SK-N-SH (cell line): ENCODE measurements at regions of chr5 and their contacts with region 1.

Region 1: GRCh38 chr5:157471709-157472108 is 11.7 kb downstream of the NIPAL4 start:
- DNase-seq: peak; percentile 51
- H3K4me3 ChIP-seq: no peak overlapping the region
- H3K27ac ChIP-seq: 0 out of 4 replicates have a peak overlapping the region, but pooled peaks of 1 of the 2 experiments have one; percentile 40
- H3K4me1 ChIP-seq: peaks cover 1 to 15% of the 10 kb centered on the region in 2 experiments; a peak in 3 of 4 replicates
- H3K27me3 ChIP-seq: no peaks in the 10 kb centered on the region
- CTCF ChIP-seq: peak; percentile 70
- EP300 ChIP-seq: no peak
- RAD21 ChIP-seq: peak; percentile 59

Region 2: GRCh38 chr5:157342822-157343402 is 128.8 kb before region 1 on chr5:
- CTCF ChIA-PET with region 1: interaction called, 21 read pairs
- POLR2A ChIA-PET with region 1: no interaction called
- DNase-seq: peak; percentile 62
- H3K4me3 ChIP-seq: no peak overlapping the region
- H3K27ac ChIP-seq: no peak overlapping the region
- H3K4me1 ChIP-seq: no peaks in the 10 kb centered on the region
- H3K27me3 ChIP-seq: no peaks in the 10 kb centered on the region
- CTCF ChIP-seq: peak; percentile 57
- EP300 ChIP-seq: no peak
- RAD21 ChIP-seq: peak; percentile 50

Region 3: GRCh38 chr5:157431544-157432200 is 40.0 kb before region 1 on chr5:
- CTCF ChIA-PET with region 1: interaction called, 54 read pairs
- POLR2A ChIA-PET with region 1: no interaction called
- DNase-seq: no peak
- H3K4me3 ChIP-seq: no peak overlapping the region; a peak in 1 of 4 replicates
- H3K27ac ChIP-seq: no peak overlapping the region
- H3K4me1 ChIP-seq: no peaks in the 10 kb centered on the region
- H3K27me3 ChIP-seq: no peaks in the 10 kb centered on the region
- CTCF ChIP-seq: peak; percentile 62
- EP300 ChIP-seq: no peak
- RAD21 ChIP-seq: peak; percentile 78

Region 4: DNA sequence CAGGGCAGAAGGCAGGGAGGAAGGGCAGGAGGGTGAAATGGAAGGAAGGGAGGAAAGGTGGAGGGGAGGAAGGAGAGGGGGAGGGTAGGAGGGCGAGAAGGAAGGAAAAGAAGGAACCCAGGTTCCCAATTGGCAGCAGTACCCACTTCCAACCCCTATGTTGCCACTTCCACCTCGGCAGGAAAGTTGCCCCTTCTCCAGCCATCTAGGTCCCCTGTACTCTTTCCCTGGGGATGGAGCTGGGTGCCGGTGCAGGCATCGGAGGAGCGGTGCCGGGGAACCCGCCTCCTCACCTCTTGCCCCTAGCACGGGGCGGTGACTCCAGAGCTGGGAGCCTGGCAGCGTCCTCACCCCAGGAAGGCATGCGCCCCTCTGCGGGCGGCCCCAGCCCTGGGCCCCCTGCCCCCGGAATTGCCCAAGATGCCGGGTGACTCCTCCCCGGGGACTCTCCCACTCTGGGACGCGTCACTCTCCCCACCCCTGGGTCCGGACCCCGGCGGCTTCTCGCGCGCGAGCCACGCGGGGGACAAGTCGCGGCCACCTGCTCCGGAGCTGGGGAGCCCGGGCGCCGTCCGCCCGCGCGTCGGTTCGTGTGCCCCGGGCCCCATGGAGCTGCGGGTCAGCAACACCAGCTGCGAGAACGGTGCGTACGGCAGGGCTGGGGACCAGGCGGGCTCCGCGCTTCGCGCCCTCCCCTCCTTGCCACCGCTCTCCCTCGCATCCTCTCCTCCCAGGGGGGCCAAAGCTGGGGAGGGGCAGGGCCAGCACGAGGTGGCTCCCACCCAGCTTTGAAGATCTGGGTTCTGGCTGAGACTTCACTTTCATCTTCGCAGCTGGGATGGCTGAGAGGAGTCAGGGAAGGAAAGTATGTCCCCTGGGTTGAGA is 11.8 kb before region 1 on chr5 and contains the start of gene NIPAL4:
- CTCF ChIA-PET with region 1: interaction called, 32 read pairs
- POLR2A ChIA-PET with region 1: no interaction called
- DNase-seq: peak; percentile 77
- H3K4me3 ChIP-seq: peak within 1 kb of the TSS; percentile 62 to 65
- H3K27ac ChIP-seq: no peak within 1 kb of the TSS
- H3K4me1 ChIP-seq: peaks cover 11 to 13% of the 10 kb centered on the region in 2 experiments; a peak in 3 of 4 replicates
- H3K27me3 ChIP-seq: no peaks in the 10 kb centered on the region
- CTCF ChIP-seq: no peak
- EP300 ChIP-seq: no peak
- RAD21 ChIP-seq: no peak
- polyA plus RNA-seq, gene NIPAL4: 2.3 and 2.6 TPM in 2 replicates

Region 5: DNA sequence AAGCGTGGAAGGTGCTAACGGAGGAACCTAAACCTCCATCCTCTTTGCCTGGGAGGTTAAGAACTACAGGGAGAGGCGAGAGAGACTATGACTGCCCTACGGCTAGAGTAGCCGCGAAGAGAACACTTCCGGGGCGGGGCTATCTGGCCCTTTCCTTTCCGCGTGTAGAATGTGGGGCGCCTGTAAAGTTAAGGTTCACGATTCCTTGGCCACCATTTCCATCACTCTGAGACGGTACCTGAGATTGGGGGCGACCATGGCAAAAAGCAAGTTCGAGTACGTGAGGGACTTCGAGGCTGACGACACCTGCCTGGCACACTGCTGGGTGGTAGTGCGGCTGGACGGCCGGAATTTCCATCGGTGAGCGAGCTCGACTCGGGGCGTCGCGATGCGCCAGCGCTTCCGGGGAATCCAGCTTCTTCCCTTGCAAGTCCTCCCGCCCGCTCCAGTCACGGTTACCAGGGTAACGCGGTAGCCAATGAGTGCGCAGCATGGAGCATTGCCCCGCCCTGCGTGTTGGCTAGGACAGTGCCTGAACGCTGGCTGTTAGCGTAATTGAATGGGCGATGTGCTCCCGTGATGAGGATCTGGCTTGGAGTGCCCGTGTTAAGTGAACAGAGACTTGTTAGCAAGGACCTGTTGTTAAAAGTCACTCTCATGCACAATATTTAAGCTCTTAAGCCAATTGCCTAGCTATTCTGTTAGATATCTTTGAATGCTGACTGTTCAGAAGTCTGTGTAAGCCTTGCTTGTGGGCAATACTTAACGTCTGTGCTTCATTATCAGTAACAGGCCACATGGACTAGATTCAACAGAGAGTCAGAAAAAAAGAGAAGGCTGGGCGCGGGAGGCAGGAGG is 259.8 kb after region 1 on chr5 and contains the start of gene THG1L:
- CTCF ChIA-PET with region 1: no interaction called
- POLR2A ChIA-PET with region 1: no interaction called
- DNase-seq: peak; percentile 91
- H3K4me3 ChIP-seq: peak within 1 kb of the TSS; percentile 84 to 93
- H3K27ac ChIP-seq: peak within 1 kb of the TSS; percentile 96 to 99
- H3K4me1 ChIP-seq: peaks cover 0 to 10% of the 10 kb centered on the region in 2 experiments; a peak in 2 of 4 replicates
- H3K27me3 ChIP-seq: no peaks in the 10 kb centered on the region
- CTCF ChIP-seq: no peak
- EP300 ChIP-seq: no peak
- RAD21 ChIP-seq: no peak
- polyA plus RNA-seq, gene THG1L: 32.0 and 37.0 TPM in 2 replicates